GM13976 (cell line): ENCODE measurements at regions of chr12 and their contacts with region 1.

Region 1: DNA sequence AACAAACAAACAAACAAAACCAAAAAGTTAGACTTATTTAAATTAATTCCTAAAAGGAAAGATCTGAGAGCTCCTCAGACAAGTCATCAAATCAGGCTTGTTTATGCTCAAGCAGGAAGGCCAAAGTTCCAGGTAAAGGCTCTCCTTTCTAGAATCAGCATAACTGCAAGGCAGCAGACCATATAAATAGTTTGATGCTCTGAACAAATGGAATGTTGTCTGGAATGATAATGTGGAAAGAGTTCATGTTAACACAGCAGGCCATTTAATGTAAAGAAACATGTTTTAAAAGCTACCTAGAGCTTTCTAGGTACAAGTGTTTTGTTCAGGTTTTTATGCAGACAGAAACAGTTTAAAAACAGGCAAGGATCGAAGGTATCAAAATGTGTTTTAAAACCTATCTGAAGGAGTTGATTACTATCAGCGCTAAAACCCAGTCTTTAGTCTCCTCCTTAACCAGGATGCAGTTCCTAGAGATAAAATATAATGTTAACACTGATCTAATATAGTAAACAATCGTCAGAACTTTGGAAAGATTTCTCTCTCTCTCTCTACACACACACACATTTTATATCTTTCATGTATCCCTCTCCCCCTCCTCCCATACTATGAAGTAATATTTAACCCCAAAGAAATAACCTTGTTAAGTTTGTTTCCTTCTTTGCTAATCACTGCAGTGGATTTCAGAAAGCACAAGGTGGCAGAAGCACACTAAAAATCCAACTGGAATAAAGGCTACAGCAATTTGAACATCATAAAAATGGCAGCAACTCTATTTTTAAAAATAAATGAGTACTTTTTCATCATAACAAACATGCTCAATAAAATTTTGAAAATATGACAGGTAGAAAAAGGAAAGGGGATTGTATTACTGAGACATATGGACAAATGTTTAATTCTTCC is 135.5 kb downstream of the PAWR start:
- DNase-seq: no peak
- CTCF ChIP-seq: peak; percentile 71

Region 2: GRCh38 chr12:78963439-78964222 is 591.6 kb before region 1 on chr12:
- in situ Hi-C with region 1: no loop called
- DNase-seq: no peak
- CTCF ChIP-seq: no peak

Region 3: DNA sequence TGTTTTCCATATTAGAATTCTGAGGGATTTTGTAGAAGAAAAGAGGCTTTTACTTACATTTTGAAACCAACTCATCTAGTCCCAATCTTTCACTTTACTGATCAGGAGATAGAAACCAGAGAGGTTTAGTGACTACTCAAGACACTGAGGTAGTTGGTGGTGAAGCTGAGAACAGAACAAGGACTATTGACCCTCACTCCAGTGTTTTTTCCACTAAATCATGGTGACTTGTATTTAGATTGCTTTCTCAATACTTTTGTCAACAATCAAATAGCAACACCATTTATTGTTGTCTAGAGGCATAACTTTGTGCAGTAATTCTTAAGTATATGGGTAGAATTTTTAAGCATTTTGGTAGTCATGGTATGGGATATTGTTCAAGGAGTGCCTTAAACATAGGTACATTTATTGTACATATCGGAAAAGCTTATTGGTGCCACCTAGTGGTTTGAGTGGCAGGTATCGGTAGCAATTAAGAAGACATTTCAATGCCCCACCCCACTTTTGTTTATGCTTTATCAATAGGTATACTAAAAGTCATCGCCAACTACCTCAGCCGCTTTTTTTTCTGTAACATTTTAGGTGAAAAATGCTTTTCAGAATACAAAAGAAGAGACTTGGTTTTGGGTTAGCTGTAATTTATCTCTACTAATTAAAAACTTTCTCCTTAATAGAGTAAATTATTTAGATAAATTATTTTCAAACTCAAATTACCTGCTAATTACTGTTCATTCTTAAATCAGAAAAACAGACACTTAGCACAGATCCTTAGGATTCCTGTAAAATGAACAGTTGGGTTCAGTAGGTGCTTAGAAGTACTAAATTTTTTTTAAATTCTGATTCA is 182.8 kb after region 1 on chr12:
- in situ Hi-C with region 1: loop called (anchors 10 kb)
- DNase-seq: peak; percentile 45
- CTCF ChIP-seq: peak; percentile 42

Region 4: GRCh38 chr12:80186727-80187217 is 631.5 kb after region 1 on chr12:
- in situ Hi-C with region 1: loop called (anchors 25 kb)
- DNase-seq: peak; percentile 30
- CTCF ChIP-seq: peak; percentile 43

Region 5: DNA sequence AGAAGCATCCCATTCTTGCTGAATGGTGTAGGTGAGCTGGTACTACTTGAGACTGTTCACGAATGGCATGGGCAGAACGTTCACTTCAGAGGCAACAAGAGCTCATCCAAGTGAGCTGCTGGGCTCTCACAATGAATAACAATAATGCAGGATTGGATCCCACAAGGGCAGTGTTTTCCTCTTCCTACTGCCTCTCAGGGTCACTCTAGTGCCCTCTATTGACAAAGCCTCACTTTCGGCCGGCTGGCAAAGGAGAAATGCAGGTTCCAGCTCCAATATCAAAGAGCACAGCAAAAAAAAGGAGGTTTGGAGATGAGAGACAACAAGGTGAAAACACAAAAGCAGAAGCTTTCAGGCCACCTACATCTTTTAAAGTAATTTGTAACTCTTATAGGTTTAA is 1077.6 kb after region 1 on chr12:
- in situ Hi-C with region 1: no loop called
- DNase-seq: no peak
- CTCF ChIP-seq: peak; percentile 27